ENCODE measurements at regions of chr13 and their contacts with region 1.

Region 1: GRCh38 chr13:49996951-49997895 is at the start of gene TRIM13:
- DNase-seq: peak; percentile 81 to 85 (median 84)
- H3K4me3 ChIP-seq: peak within 1 kb of the TSS; percentile 82 to 96
- H3K4me3 Mint-ChIP-seq: peak within 1 kb of the TSS; percentile 89 to 94 (median 90)
- H3K27ac ChIP-seq: peak within 1 kb of the TSS; percentile 83
- H3K27ac Mint-ChIP-seq: peak within 1 kb of the TSS; percentile 84 to 93 (median 91)
- H3K4me1 ChIP-seq: peaks cover 59% of the 10 kb centered on the region
- H3K4me1 Mint-ChIP-seq: peaks cover 30 to 63% (median 43%) of the 10 kb centered on the region in 4 donors
- H3K27me3 ChIP-seq: no peaks in the 10 kb centered on the region
- H3K27me3 Mint-ChIP-seq: no peaks in the 10 kb centered on the region
- total RNA-seq, gene TRIM13: 30.3 to 32.4 TPM

Region 2: DNA sequence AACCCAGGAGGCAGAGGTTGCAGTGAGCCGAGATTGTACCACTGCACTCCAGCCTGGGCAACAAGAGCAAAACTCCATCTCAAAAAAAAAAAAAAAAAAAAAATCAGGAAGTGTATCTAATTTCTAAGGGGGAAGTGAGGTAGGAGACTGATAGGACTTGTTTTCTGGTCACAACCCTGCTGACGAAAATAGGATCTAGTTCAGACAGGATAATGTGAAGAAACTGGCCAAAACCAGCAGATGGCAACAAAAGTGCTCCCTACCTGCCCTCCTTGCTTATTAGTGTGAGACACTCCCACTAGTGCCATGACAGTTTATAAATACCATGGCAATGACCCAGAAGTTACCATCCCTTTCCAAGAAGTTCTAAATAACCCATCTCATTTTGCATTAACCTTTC is 168.8 kb before region 1 on chr13:
- CTCF ChIA-PET with region 1: no interaction called
- POLR2A ChIA-PET with region 1: no interaction called
- intact Hi-C with region 1: no loop called
- DNase-seq: no peak
- H3K4me3 ChIP-seq: no peak overlapping the region
- H3K4me3 Mint-ChIP-seq: no peak overlapping the region
- H3K27ac ChIP-seq: no peak overlapping the region
- H3K27ac Mint-ChIP-seq: no peak overlapping the region
- H3K4me1 ChIP-seq: no peaks in the 10 kb centered on the region
- H3K4me1 Mint-ChIP-seq: peaks cover 2 to 11% (median 6%) of the 10 kb centered on the region in 4 donors
- H3K27me3 ChIP-seq: no peaks in the 10 kb centered on the region
- H3K27me3 Mint-ChIP-seq: peaks cover 0 to 18% of the 10 kb centered on the region in 2 donors

Region 3: GRCh38 chr13:49936085-49936940 is 60.9 kb before region 1 on chr13 and contains the start of gene SPRYD7:
- CTCF ChIA-PET with region 1: interaction called, 10 read pairs
- POLR2A ChIA-PET with region 1: interaction called, 23 read pairs
- intact Hi-C with region 1: loop called (anchors 1 kb)
- DNase-seq: peak; percentile 89 to 92 (median 92)
- H3K4me3 ChIP-seq: peak within 1 kb of the TSS; percentile 66 to 96
- H3K4me3 Mint-ChIP-seq: peak within 1 kb of the TSS; percentile 91 to 97 (median 95)
- H3K27ac ChIP-seq: peak within 1 kb of the TSS; percentile 63
- H3K27ac Mint-ChIP-seq: peak within 1 kb of the TSS; percentile 85 to 97 (median 94)
- H3K4me1 ChIP-seq: peaks cover 19% of the 10 kb centered on the region
- H3K4me1 Mint-ChIP-seq: peaks cover 12 to 23% (median 15%) of the 10 kb centered on the region in 4 donors
- H3K27me3 ChIP-seq: no peaks in the 10 kb centered on the region
- H3K27me3 Mint-ChIP-seq: no peaks in the 10 kb centered on the region
- total RNA-seq, gene SPRYD7: 3.3 to 5.1 TPM

Region 4: GRCh38 chr13:50106559-50106958 is 109.3 kb after region 1 on chr13:
- CTCF ChIA-PET with region 1: interaction called, 6 read pairs
- POLR2A ChIA-PET with region 1: interaction called, 14 read pairs
- intact Hi-C with region 1: no loop called
- DNase-seq: no peak
- H3K4me3 ChIP-seq: no peak overlapping the region
- H3K4me3 Mint-ChIP-seq: peak overlapping the region in 7 of 8 donors; percentile 21 to 88 (median 65)
- H3K27ac ChIP-seq: peak overlapping the region; percentile 36
- H3K27ac Mint-ChIP-seq: peak overlapping the region; percentile 36 to 93 (median 86)
- H3K4me1 ChIP-seq: peaks cover 52% of the 10 kb centered on the region
- H3K4me1 Mint-ChIP-seq: peaks cover 35 to 66% (median 48%) of the 10 kb centered on the region in 4 donors
- H3K27me3 ChIP-seq: no peaks in the 10 kb centered on the region
- H3K27me3 Mint-ChIP-seq: no peaks in the 10 kb centered on the region

Region 5: DNA sequence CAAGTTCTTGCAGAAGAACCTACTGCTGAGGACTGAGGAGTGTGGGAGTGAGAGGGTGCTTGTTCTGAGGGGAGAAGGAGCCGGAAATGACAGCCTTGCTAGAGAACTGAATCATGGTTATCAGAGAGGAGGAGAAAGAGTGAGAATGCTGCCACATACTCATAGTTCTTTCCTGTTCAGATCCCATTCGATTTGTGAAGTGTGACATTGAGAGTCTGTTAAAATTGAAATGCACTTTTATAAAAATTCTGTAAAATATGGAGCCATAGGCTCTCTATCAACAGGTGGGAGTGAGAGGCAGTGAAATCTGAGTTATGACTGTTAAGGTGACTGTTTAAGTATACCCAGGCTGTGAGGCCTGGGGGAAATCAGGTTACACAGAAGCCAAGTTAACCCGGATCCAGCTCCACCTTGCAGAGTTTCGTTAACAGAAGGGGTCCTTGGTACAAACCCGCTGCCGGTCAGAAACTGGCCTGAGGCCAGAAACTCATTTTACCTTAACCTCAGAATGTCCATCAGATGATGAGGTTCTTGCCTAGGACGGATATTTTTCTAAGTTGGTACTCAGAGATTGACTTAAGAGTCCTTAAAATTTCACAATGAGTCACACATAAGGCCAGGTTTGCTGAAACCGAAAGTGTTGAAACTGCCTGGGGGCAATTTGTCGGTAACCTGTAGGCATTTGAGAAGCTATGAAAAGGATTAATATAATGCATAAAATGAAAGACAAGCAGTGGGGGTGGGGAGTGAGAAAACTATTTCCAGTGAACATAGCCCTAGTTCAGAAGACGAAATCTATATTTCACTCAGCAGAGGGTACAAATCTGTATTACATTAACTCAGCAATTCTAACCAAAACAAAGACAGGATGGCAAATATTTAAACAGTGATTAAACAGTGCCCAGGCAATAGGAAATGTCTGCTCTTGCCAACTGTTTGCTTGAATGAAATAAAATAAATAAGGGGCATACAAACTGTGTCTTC is 368.5 kb after region 1 on chr13:
- CTCF ChIA-PET with region 1: interaction called, 14 read pairs
- POLR2A ChIA-PET with region 1: interaction called, 21 read pairs
- intact Hi-C with region 1: loop called (anchors 10 kb)
- DNase-seq: peak; percentile 49 to 69 (median 57)
- H3K4me3 ChIP-seq: peak overlapping the region; percentile 36 to 37
- H3K4me3 Mint-ChIP-seq: peak overlapping the region; percentile 77 to 87 (median 83)
- H3K27ac ChIP-seq: peak overlapping the region; percentile 68
- H3K27ac Mint-ChIP-seq: peak overlapping the region; percentile 93 to 97 (median 96)
- H3K4me1 ChIP-seq: peaks cover 43% of the 10 kb centered on the region
- H3K4me1 Mint-ChIP-seq: peaks cover 49 to 61% (median 55%) of the 10 kb centered on the region in 4 donors
- H3K27me3 ChIP-seq: no peaks in the 10 kb centered on the region
- H3K27me3 Mint-ChIP-seq: peaks cover 0 to 2% of the 10 kb centered on the region in 2 donors

Region 6: GRCh38 chr13:50801087-50801931 is 804.1 kb after region 1 on chr13:
- CTCF ChIA-PET with region 1: interaction called, 18 read pairs
- POLR2A ChIA-PET with region 1: interaction called, 6 read pairs
- intact Hi-C with region 1: loop called (anchors 1 kb)
- DNase-seq: peak; percentile 61 to 68 (median 62)
- H3K4me3 ChIP-seq: no peak overlapping the region
- H3K4me3 Mint-ChIP-seq: peak overlapping the region in 1 of 8 donors; percentile 22
- H3K27ac ChIP-seq: no peak overlapping the region
- H3K27ac Mint-ChIP-seq: peak overlapping the region in 2 of 7 donors; percentile 39 to 53
- H3K4me1 ChIP-seq: peaks cover 6% of the 10 kb centered on the region
- H3K4me1 Mint-ChIP-seq: peaks cover 5 to 9% (median 6%) of the 10 kb centered on the region in 4 donors
- H3K27me3 ChIP-seq: no peaks in the 10 kb centered on the region
- H3K27me3 Mint-ChIP-seq: no peaks in the 10 kb centered on the region

Region 7: DNA sequence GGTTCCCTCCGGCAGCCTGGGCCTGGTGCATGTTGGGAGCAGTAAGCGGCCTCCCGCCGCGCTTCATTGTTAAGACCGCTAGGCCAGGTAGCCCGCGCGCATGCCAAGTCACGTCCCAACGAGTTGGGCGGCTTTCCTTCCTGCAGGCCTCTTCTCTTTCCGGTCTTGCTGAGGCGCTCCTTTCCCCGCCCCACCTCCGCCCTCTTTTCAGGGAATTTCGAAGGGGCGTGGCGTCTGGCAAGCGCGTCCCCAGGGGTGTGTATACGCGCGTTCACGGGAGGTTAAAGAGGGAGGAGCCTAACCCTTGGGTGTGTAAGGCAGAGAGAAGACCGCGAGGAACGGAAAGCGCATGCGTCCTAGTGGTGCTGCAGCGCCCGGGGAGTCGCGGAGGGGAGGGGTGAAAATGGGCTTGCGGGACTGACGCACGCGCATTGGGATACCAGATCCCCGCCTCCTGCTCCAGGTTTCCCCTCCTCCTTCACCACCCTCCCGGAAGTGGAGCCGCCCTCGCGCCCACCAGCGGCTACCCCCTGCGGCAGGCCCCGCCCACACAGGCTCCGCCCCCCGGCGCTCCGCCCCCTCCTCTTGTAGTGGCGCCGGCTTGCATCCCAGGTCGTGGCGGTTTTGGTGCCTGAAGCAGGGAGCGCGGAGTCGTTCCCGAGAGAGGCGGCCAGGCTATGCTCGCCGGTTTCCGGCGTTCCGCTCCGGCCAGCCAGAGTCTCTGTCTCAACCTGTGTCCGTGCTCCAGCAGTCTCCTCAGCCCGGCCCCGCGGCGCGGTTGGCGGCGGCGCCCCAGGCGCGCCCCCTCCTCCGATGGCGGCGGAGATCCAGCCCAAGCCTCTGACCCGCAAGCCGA is 1586.9 kb after region 1 on chr13 and contains the start of gene WDFY2:
- CTCF ChIA-PET with region 1: no interaction called
- POLR2A ChIA-PET with region 1: no interaction called
- intact Hi-C with region 1: loop called (anchors 5 kb)
- DNase-seq: peak; percentile 99 to 100 (median 100)
- H3K4me3 ChIP-seq: peak within 1 kb of the TSS; percentile 65 to 92
- H3K4me3 Mint-ChIP-seq: peak within 1 kb of the TSS; percentile 97 to 100 (median 99)
- H3K27ac ChIP-seq: peak within 1 kb of the TSS; percentile 88
- H3K27ac Mint-ChIP-seq: peak within 1 kb of the TSS; percentile 96 to 100 (median 100)
- H3K4me1 ChIP-seq: peaks cover 26% of the 10 kb centered on the region
- H3K4me1 Mint-ChIP-seq: peaks cover 27 to 44% (median 35%) of the 10 kb centered on the region in 4 donors
- H3K27me3 ChIP-seq: no peaks in the 10 kb centered on the region
- H3K27me3 Mint-ChIP-seq: no peaks in the 10 kb centered on the region
- total RNA-seq, gene WDFY2: 20.0 to 21.8 TPM